Ovary (tissue), 10 donors: ENCODE measurements at regions of chrX and their contacts with region 1.

Region 1: GRCh38 chrX:69538321-69538876 is 34.3 kb downstream of the NALF2 start:
- DNase-seq: peak; percentile 69 to 84 (median 80)
- H3K4me3 ChIP-seq: peak overlapping the region; percentile 34
- H3K27ac ChIP-seq: no peak overlapping the region
- H3K4me1 ChIP-seq: no peaks in the 10 kb centered on the region
- H3K27me3 ChIP-seq: no peaks in the 10 kb centered on the region
- CTCF ChIP-seq: peak; percentile 61 to 70 (median 63)
- EP300 ChIP-seq: no peak
- POLR2A ChIP-seq: no peak

Region 2: GRCh38 chrX:69615779-69616456 is 77.5 kb after region 1 on chrX and contains the start of gene EDA:
- intact Hi-C with region 1: loop called in 1 of 4 experiments (anchors 5 kb)
- DNase-seq: peak; percentile 82 to 91 (median 86)
- H3K4me3 ChIP-seq: peak within 1 kb of the TSS; percentile 50
- H3K27ac ChIP-seq: no peak within 1 kb of the TSS
- H3K4me1 ChIP-seq: no peaks in the 10 kb centered on the region
- H3K27me3 ChIP-seq: no peaks in the 10 kb centered on the region
- CTCF ChIP-seq: no peak
- EP300 ChIP-seq: no peak
- POLR2A ChIP-seq: no peak
- total RNA-seq, gene EDA: 5.6 to 9.3 (median 8.5) TPM

Region 3: GRCh38 chrX:70096052-70096451 is 557.7 kb after region 1 on chrX:
- intact Hi-C with region 1: loop called in 2 of 4 experiments (anchors 5 to 10 kb)
- DNase-seq: no peak
- H3K4me3 ChIP-seq: no peak overlapping the region
- H3K27ac ChIP-seq: no peak overlapping the region
- H3K4me1 ChIP-seq: no peaks in the 10 kb centered on the region
- H3K27me3 ChIP-seq: no peaks in the 10 kb centered on the region
- CTCF ChIP-seq: no peak
- EP300 ChIP-seq: no peak
- POLR2A ChIP-seq: no peak